Heart right ventricle (tissue), 16 donors: ENCODE measurements at regions of chr10 and their contacts with region 1.

Region 1: DNA sequence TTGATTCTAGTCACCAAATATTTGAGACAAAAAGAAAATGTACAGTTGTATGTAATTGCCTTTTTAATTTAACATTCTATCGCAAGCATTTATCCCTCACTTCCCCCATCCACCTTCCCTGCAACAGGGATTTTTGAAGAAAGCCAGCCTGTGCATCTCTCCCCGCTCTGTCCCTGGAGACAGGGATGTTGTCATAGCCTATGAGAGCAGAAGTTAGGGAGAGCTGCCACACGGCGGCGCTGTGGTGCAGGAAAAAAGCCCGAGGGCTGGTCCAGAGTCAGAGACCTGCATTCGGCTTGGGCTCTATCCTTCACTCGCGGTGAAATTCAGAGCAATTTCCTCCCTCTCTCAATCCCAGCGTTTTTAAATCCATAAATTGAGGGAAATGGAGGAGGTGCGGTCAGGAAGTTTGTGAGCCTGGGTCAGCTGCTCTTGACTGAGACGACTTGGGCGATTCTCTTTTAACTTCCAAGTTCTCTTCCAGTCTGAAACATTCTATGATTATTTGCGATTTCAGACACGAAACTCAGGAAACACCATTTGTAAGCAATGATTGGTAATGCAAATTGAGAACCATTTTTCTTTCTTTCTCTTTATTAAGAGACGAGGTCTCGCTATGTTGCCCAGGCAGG is 17.5 kb downstream of the HKDC1 start:
- DNase-seq: peak; percentile 88 to 91
- ATAC-seq: peak; percentile 95 to 100 (median 98)
- H3K4me3 ChIP-seq: no peak overlapping the region
- H3K27ac ChIP-seq: no peak overlapping the region
- H3K4me1 ChIP-seq: peaks cover 0 to 19% (median 4%) of the 10 kb centered on the region in 9 donors
- H3K27me3 ChIP-seq: no peaks in the 10 kb centered on the region
- CTCF ChIP-seq: peak; percentile 76 to 96 (median 93)

Region 2: GRCh38 chr10:69392481-69393000 is 154.9 kb after region 1 on chr10:
- intact Hi-C with region 1: loop called (anchors 1 to 5 kb)
- DNase-seq: peak; percentile 83 to 89
- ATAC-seq: peak; percentile 88 to 94 (median 90)
- H3K4me3 ChIP-seq: no peak overlapping the region
- H3K27ac ChIP-seq: peak overlapping the region in 3 of 10 donors; percentile 11 to 57 (median 38)
- H3K4me1 ChIP-seq: peaks cover 8 to 45% (median 28%) of the 10 kb centered on the region in 9 donors
- H3K27me3 ChIP-seq: no peaks in the 10 kb centered on the region
- CTCF ChIP-seq: peak; percentile 92 to 98 (median 96)

Region 3: GRCh38 chr10:69639291-69640195 is 401.9 kb after region 1 on chr10:
- intact Hi-C with region 1: loop called in 5 of 10 experiments (anchors 2 to 10 kb)
- DNase-seq: peak; percentile 36 to 64
- ATAC-seq: peak in 6 of 8 donors; percentile 32 to 75 (median 60)
- H3K4me3 ChIP-seq: no peak overlapping the region
- H3K27ac ChIP-seq: no peak overlapping the region
- H3K4me1 ChIP-seq: no peaks in the 10 kb centered on the region
- H3K27me3 ChIP-seq: peaks cover 0 to 37% (median 12%) of the 10 kb centered on the region in 7 donors
- CTCF ChIP-seq: peak; percentile 75 to 90 (median 87)